Endothelial cell of umbilical vein (primary cell): ENCODE measurements at regions of chr13 and their contacts with region 1.

Region 1: GRCh38 chr13:112443995-112444860 is 68.1 kb downstream of the SPACA7 start:
- DNase-seq: peak; percentile 53
- H3K4me3 ChIP-seq: no peak overlapping the region
- H3K27ac ChIP-seq: no peak overlapping the region
- H3K4me1 ChIP-seq: no peaks in the 10 kb centered on the region
- H3K27me3 ChIP-seq: no peaks in the 10 kb centered on the region
- CTCF ChIP-seq: peak; percentile 85 to 94
- POLR2A ChIP-seq: no peak

Region 2: GRCh38 chr13:111216166-111216960 is 1227.9 kb before region 1 on chr13:
- CTCF ChIA-PET with region 1: no interaction called
- POLR2A ChIA-PET with region 1: no interaction called
- dilution Hi-C with region 1: no loop called
- intact Hi-C with region 1: loop called (anchors 5 kb)
- DNase-seq: no peak
- H3K4me3 ChIP-seq: no peak overlapping the region
- H3K27ac ChIP-seq: no peak overlapping the region
- H3K4me1 ChIP-seq: peaks cover 11% of the 10 kb centered on the region
- H3K27me3 ChIP-seq: no peaks in the 10 kb centered on the region
- CTCF ChIP-seq: peak; percentile 11 to 54
- POLR2A ChIP-seq: no peak

Region 3: GRCh38 chr13:111474136-111475002 is 969.9 kb before region 1 on chr13:
- CTCF ChIA-PET with region 1: interaction called, 16 read pairs
- POLR2A ChIA-PET with region 1: no interaction called
- dilution Hi-C with region 1: no loop called
- intact Hi-C with region 1: loop called (anchors 1 kb)
- DNase-seq: peak; percentile 20
- H3K4me3 ChIP-seq: no peak overlapping the region
- H3K27ac ChIP-seq: no peak overlapping the region
- H3K4me1 ChIP-seq: no peaks in the 10 kb centered on the region
- H3K27me3 ChIP-seq: no peaks in the 10 kb centered on the region
- CTCF ChIP-seq: peak; percentile 19 to 35
- POLR2A ChIP-seq: no peak

Region 4: DNA sequence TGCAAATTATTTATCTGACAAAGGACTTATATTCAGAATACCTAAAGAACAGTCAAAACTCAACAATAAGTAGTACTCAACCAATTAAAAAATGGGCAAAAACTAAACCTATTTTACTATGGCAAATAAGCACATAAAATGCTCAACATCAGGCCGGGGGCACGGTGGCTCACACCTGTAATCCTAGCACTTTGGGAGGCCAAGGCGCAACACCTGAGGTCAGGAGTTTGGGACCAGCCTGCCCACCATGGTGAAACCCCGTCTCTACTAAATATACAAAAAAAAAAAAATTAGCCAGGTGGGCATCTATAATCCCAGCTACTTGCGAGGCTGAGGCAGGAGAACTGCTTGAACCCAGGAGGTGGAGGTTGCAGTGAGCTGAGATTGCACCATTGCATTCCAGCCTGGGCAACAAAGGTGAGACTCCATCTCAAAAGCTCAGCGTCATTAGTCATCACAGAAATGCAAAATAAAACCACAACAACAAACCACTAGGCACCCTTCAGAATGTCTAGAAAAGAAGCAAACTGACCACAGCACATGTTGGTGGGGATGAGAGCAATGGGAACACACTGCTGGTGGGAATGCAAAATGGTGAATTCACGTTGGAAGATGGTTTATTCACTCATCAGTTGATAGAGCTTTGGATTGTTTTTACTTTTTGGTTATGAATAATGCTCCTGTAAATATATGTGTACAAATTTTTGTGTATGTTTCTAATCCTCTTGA is 557.8 kb before region 1 on chr13:
- CTCF ChIA-PET with region 1: no interaction called
- POLR2A ChIA-PET with region 1: no interaction called
- dilution Hi-C with region 1: no loop called
- intact Hi-C with region 1: no loop called
- DNase-seq: no peak
- H3K4me3 ChIP-seq: no peak overlapping the region
- H3K27ac ChIP-seq: no peak overlapping the region
- H3K4me1 ChIP-seq: no peaks in the 10 kb centered on the region
- H3K27me3 ChIP-seq: no peaks in the 10 kb centered on the region
- CTCF ChIP-seq: no peak
- POLR2A ChIP-seq: no peak

Region 5: DNA sequence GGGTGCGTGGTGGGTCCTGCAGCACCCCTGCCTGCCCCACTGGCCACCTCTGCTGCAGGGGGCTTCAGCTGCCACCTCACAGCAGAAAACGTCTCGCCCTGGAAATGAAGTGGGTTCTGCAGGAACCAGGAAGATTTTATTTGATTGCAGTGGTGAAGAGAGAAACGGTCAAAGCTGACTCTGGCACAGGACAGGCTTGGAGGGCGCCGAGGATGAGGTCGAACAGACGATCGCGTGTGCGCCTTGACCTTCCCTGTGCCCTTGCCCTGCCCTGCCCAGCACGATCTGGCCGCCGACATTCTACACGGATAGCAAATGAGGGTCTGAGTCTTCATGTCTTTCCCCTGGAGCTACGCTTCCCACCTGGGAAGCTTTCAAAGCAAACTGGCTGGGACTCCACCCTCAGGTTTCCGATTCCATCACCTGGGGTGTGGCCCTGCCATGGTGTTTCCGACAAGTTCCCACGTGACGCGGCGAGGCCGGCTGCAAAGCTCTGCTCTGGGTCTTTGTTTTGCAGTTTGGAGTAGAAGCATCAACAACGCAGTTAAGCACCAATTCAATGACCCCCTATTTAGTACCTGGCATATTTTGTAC is 194.0 kb after region 1 on chr13:
- CTCF ChIA-PET with region 1: no interaction called
- POLR2A ChIA-PET with region 1: no interaction called
- dilution Hi-C with region 1: no loop called
- intact Hi-C with region 1: no loop called
- DNase-seq: no peak
- H3K4me3 ChIP-seq: no peak overlapping the region
- H3K27ac ChIP-seq: no peak overlapping the region
- H3K4me1 ChIP-seq: peaks cover 4% of the 10 kb centered on the region
- H3K27me3 ChIP-seq: peaks cover 22 to 32% of the 10 kb centered on the region in 2 experiments
- CTCF ChIP-seq: no peak
- POLR2A ChIP-seq: no peak